Sigmoid colon (tissue), 7 donors: ENCODE measurements at regions of chr15 and their contacts with region 1.

Region 1: GRCh38 chr15:79896637-79897379 is at the start of gene MTHFS:
- DNase-seq: peak; percentile 82
- H3K4me3 ChIP-seq: peak within 1 kb of the TSS; percentile 52 to 96 (median 70)
- H3K27ac ChIP-seq: peak within 1 kb of the TSS; percentile 86 to 98 (median 89)
- H3K4me1 ChIP-seq: peaks cover 0 to 13% (median 8%) of the 10 kb centered on the region in 4 donors
- H3K27me3 ChIP-seq: no peaks in the 10 kb centered on the region
- CTCF ChIP-seq: peak in 3 of 4 experiments; percentile 3 to 52 (median 28)
- EP300 ChIP-seq: no peak
- POLR2A ChIP-seq: no peak
- total RNA-seq, gene MTHFS: 6.9 to 31.0 (median 9.5) TPM

Region 2: GRCh38 chr15:79923515-79924395 is 26.9 kb after region 1 on chr15:
- intact Hi-C with region 1: loop called (anchors 2 kb)
- DNase-seq: peak; percentile 97
- H3K4me3 ChIP-seq: peak overlapping the region; percentile 69 to 92 (median 80)
- H3K27ac ChIP-seq: peak overlapping the region; percentile 89 to 99 (median 94)
- H3K4me1 ChIP-seq: peaks cover 0 to 16% (median 8%) of the 10 kb centered on the region in 4 donors
- H3K27me3 ChIP-seq: no peaks in the 10 kb centered on the region
- CTCF ChIP-seq: no peak
- EP300 ChIP-seq: no peak
- POLR2A ChIP-seq: peak; percentile 67 to 76

Region 3: DNA sequence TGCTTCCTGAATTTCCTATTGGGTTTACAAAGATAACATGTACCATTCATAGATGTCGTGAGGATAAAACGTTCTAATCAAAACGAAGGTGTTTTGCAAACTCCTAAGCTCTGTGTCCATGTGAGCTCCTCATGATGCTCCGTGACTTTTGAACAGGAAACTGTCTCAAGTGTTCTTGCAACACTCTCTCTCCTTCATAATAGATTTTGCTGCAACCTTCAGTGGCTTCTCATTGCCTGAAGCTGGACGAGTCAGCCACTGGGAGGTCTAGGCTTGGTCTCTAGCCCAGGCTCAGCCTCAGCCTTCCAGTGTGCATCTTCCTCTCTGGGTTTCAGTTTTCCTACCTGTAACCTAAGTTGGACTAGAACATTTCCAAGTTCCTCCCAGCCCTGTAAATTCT is 92.9 kb after region 1 on chr15:
- intact Hi-C with region 1: loop called (anchors 5 kb)
- DNase-seq: no peak
- H3K4me3 ChIP-seq: no peak overlapping the region
- H3K27ac ChIP-seq: no peak overlapping the region
- H3K4me1 ChIP-seq: peaks cover 0 to 4% (median 0%) of the 10 kb centered on the region in 4 donors
- H3K27me3 ChIP-seq: no peaks in the 10 kb centered on the region
- CTCF ChIP-seq: no peak
- EP300 ChIP-seq: no peak
- POLR2A ChIP-seq: no peak

Region 4: GRCh38 chr15:80152180-80152845 is 255.5 kb after region 1 on chr15:
- intact Hi-C with region 1: loop called (anchors 10 kb)
- DNase-seq: peak; percentile 99
- H3K4me3 ChIP-seq: peak overlapping the region; percentile 58 to 80 (median 74)
- H3K27ac ChIP-seq: peak overlapping the region; percentile 81 to 90 (median 86)
- H3K4me1 ChIP-seq: peaks cover 0 to 19% (median 13%) of the 10 kb centered on the region in 4 donors
- H3K27me3 ChIP-seq: no peaks in the 10 kb centered on the region
- CTCF ChIP-seq: no peak
- EP300 ChIP-seq: no peak
- POLR2A ChIP-seq: no peak